AG04450 (cell line): ENCODE measurements at regions of chr16 and their contacts with region 1.

Region 1: GRCh38 chr16:21300309-21301167 is 22.4 kb upstream of the CRYM start:
- DNase-seq: peak; percentile 100
- H3K4me3 ChIP-seq: peak overlapping the region; percentile 79
- H3K27ac ChIP-seq: peak overlapping the region; percentile 59
- H3K27me3 ChIP-seq: no peaks in the 10 kb centered on the region
- CTCF ChIP-seq: peak; percentile 94

Region 2: DNA sequence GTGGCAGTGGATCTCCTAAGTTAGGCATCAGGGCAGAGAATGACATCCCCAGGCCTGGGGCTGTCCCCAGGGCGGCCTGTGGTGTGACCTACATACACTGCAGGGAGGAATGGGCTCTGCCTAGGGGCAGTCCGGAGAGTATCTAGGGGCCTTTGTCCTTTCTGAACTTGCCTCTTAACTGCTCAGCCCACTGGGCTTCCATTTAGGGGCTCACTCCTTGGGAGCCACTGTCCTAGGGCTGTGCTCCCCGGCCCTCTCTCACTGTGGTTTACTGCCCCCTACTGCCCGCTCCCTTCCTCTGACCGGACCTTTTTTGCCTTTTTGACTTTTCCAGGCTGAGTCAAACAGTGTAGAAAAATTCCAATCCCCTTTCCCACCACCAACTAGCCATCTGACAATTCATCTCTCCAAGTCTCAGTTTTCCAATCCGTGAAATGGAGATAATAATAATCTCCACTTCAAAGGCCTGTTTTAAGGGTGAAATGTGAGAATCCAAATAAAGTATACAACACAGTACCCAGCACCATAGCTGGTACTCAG is 216.7 kb before region 1 on chr16:
- CTCF ChIA-PET with region 1: no interaction called
- POLR2A ChIA-PET with region 1: no interaction called
- DNase-seq: no peak
- H3K4me3 ChIP-seq: no peak overlapping the region
- H3K27ac ChIP-seq: no peak overlapping the region
- H3K27me3 ChIP-seq: no peaks in the 10 kb centered on the region
- CTCF ChIP-seq: peak; percentile 72

Region 3: GRCh38 chr16:21158208-21159110 is 142.1 kb before region 1 on chr16 and contains the start of gene LDAF1:
- CTCF ChIA-PET with region 1: interaction called, 88 read pairs
- POLR2A ChIA-PET with region 1: interaction called, 23 read pairs
- DNase-seq: no peak
- H3K4me3 ChIP-seq: peak within 1 kb of the TSS; percentile 77
- H3K27ac ChIP-seq: peak within 1 kb of the TSS; percentile 78
- H3K27me3 ChIP-seq: no peaks in the 10 kb centered on the region
- CTCF ChIP-seq: no peak
- polyA plus RNA-seq, gene LDAF1: 42.5 and 50.3 TPM in 2 replicates

Region 4: DNA sequence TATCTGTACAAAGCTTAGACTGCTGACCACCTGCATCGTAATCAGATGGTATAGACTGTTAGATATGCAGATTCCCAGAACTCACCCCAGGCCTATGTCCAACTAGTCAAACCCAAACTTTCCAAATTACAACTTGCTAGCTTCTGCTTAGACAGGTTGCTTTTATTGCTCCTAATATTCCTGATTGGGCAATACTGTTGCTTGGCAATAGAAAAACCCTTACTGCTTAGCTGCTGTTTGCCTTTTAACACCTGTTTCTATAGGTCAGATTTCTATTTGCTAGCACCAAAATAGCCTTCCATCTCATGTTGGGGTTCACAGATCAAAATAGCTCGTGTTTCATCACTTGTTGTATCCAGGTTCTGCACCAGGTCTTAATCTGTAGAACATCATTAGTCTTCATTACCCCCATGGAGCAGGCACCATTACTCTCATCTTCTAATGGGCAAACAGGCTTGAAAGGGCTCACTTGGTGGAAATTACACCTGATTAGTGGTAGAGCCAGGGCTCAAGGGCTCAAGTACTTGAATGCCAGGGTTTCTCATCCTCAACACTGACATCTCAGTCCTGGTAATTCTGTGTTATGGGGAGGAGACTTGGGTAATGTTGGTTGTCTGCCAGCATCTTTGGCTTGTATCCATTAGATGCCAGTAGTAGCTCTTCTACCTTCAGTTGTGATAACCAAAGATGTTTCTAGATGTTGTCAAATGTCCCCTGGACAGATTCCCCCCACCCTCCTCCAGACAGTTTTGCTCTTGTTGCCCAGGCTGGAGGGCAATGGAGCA is 91.9 kb before region 1 on chr16:
- CTCF ChIA-PET with region 1: no interaction called
- POLR2A ChIA-PET with region 1: no interaction called
- DNase-seq: no peak
- H3K4me3 ChIP-seq: no peak overlapping the region
- H3K27ac ChIP-seq: no peak overlapping the region
- H3K27me3 ChIP-seq: peaks cover 32% of the 10 kb centered on the region
- CTCF ChIP-seq: no peak

Region 5: DNA sequence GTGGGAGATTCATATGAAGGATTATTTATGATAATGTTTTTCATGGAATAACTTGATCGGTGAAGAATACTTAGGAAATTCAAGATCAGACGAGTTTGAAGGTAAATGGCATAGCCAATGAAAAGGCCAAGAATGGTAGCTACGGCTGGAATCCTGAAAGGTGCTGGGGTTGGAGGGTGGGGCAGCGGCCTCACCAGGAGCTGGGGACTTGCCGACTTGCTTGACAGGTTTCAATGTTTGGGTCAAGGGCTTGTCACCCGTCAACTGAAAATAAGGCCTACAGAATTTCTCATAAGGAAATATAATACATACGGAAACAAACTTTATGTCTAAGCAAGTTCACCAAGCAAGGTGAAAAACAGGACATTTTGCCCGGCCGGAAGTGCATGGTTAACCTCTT is 32.3 kb before region 1 on chr16:
- CTCF ChIA-PET with region 1: no interaction called
- POLR2A ChIA-PET with region 1: no interaction called
- DNase-seq: no peak
- H3K4me3 ChIP-seq: no peak overlapping the region
- H3K27ac ChIP-seq: no peak overlapping the region
- H3K27me3 ChIP-seq: peaks cover 3% of the 10 kb centered on the region
- CTCF ChIP-seq: no peak

Region 6: GRCh38 chr16:21283521-21284289 is 16.8 kb before region 1 on chr16:
- CTCF ChIA-PET with region 1: interaction called, 17 read pairs
- POLR2A ChIA-PET with region 1: interaction called, 3 read pairs
- DNase-seq: no peak
- H3K4me3 ChIP-seq: peak overlapping the region; percentile 52
- H3K27ac ChIP-seq: no peak overlapping the region
- H3K27me3 ChIP-seq: peaks cover 39% of the 10 kb centered on the region
- CTCF ChIP-seq: peak; percentile 71